ENCODE measurements at regions of chr2 and their contacts with region 1.

Region 1: DNA sequence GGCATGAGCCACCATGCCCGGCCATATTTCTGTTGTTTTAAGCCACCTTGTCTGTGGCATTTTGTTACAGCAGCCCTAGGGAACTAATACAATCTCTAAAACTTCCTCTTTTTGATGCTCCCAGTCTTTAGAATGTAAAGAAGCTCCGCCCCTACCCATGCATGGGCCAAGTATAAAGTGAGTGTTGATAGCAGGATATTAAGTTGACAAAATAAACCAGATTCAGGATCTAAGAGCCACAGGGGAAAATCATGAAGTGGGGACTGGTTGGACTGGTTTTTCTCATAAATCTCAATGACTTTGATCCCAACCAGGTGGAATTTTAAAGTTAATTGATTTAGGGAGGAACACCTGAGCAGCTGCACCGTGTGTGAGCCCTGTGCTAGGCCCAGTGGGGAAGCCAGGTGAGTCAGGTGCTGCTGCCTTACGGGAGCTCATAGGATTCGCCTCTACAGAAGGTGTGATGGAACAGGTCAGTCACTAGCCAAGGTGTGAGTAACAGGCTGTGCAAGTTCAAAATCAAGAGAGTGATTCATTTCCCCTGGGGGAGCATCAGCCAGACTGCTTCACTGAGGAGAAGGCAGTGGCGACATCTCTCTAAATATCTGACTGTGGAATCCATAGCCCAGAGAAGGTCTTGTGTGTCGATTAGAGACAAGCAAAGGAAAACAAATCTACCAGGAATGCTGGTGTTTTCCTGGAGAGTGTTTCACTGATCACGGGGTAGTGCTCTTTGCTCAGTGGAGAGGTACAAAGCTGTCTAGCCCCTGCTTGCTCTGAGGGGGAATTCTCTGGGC is 63.0 kb upstream of the MSH2 start:
- DNase-seq: no peak
- H3K4me3 ChIP-seq: no peak overlapping the region
- H3K4me1 ChIP-seq: peaks cover 8% of the 10 kb centered on the region
- H3K27me3 ChIP-seq: no peaks in the 10 kb centered on the region

Region 2: DNA sequence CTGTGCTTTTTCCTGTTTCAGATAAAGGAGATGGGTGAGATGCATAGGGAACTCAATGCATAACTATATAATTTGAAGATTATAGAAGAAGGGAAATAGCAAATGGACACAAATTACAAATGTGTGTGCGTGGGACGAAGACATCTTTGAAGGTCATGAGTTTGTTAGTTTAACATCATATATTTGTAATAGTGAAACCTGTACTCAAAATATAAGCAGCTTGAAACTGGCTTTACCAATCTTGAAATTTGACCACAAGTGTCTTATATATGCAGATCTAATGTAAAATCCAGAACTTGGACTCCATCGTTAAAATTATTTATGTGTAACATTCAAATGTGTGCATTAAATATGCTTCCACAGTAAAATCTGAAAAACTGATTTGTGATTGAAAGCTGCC is 46.6 kb after region 1 on chr2:
- in situ Hi-C with region 1: loop called (anchors 5 kb)
- DNase-seq: no peak
- H3K4me3 ChIP-seq: no peak overlapping the region
- H3K4me1 ChIP-seq: no peaks in the 10 kb centered on the region
- H3K27me3 ChIP-seq: no peaks in the 10 kb centered on the region

Region 3: DNA sequence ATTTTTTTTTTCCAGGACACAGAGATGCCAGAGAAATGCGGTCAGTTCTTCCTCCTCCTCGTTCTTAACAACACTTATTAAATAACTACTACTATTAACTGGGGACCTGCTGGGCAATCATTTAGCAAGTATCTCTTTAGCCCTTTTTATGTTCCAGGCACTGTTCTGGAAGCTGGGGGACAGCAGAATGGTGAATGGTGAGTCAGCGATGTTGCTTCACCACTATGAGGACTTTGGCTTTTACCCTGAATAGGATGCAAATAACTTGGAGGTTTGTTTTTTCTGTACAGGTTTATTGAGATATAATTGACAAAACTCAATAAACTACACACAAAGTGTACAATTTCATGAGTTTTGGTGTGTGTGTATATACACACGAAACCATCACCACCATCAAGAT is 263.1 kb after region 1 on chr2:
- in situ Hi-C with region 1: no loop called
- DNase-seq: no peak
- H3K4me3 ChIP-seq: no peak overlapping the region
- H3K4me1 ChIP-seq: no peaks in the 10 kb centered on the region
- H3K27me3 ChIP-seq: peaks cover 3% of the 10 kb centered on the region; the same call in 1 of the 2 replicates

Region 4: GRCh38 chr2:47767880-47768609 is 428.1 kb after region 1 on chr2:
- in situ Hi-C with region 1: loop called (anchors 5 kb)
- DNase-seq: peak; percentile 11 to 83
- H3K4me3 ChIP-seq: no peak overlapping the region
- H3K4me1 ChIP-seq: no peaks in the 10 kb centered on the region
- H3K27me3 ChIP-seq: no peaks in the 10 kb centered on the region

Measured in HAP-1 (cell line).